Lower leg skin (tissue), 4 donors: ENCODE measurements at regions of chr14 and their contacts with region 1.

Region 1: GRCh38 chr14:97930166-97930565 is 1133.0 kb downstream of the VRK1 start:
- DNase-seq: no peak
- H3K4me3 ChIP-seq: no peak overlapping the region
- CTCF ChIP-seq: no peak
- POLR2A ChIP-seq: no peak

Region 2: DNA sequence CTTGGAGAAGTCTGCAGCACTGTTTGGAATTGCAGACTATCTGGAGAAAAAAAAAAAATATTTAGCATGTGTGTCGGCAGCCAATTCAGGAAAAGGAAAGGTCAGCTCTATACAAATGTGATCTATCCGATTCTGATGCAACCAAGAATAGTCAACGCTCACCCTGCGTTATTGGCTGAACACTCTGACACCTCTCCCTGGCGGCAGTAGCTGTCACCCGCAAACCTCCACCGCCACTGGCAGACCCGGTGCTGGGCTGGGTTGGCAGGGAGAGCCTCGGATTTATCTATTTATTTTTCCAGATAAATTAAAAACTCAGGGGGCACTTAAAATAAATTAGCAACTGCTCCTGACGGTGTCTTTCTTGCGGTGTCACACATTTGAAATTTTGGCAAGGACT is 723.2 kb before region 1 on chr14:
- intact Hi-C with region 1: no loop called
- DNase-seq: no peak
- H3K4me3 ChIP-seq: no peak overlapping the region
- CTCF ChIP-seq: no peak
- POLR2A ChIP-seq: no peak

Region 3: GRCh38 chr14:97527993-97528392 is 402.2 kb before region 1 on chr14:
- intact Hi-C with region 1: no loop called
- DNase-seq: no peak
- H3K4me3 ChIP-seq: no peak overlapping the region
- CTCF ChIP-seq: no peak
- POLR2A ChIP-seq: no peak

Region 4: DNA sequence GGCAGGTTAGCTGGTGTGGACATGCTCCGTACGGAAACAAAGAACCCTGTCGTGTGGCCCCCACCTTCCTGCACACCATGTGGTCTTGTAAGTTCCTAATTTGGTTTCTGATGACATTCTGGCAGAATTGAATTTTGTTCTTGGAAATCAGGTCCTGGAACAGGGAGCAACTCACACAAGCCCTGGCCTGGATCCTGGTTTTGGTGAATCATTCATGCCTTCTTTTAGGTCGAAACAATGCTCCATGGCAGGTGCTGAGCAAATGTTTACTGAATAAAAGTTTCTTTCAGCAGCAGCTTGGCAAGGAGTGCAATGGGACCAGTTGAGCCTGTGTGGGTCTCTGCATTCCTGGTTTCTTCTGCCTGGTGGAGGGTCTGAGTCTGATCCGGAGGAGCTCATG is 363.4 kb after region 1 on chr14:
- intact Hi-C with region 1: loop called (anchors 10 kb)
- DNase-seq: peak in 1 of 2 donors; percentile 18
- H3K4me3 ChIP-seq: no peak overlapping the region
- CTCF ChIP-seq: no peak
- POLR2A ChIP-seq: no peak